Colonic mucosa (tissue), 4 donors: ENCODE measurements at regions of chr19 and their contacts with region 1.

Region 1: GRCh38 chr19:34364830-34365462 is at the start of gene GPI:
- DNase-seq: peak; percentile 76
- H3K4me3 ChIP-seq: peak within 1 kb of the TSS; percentile 100
- H3K27ac ChIP-seq: peak within 1 kb of the TSS; percentile 77
- H3K4me1 ChIP-seq: peaks cover 13% of the 10 kb centered on the region
- H3K27me3 ChIP-seq: no peaks in the 10 kb centered on the region
- CTCF ChIP-seq: no peak
- total RNA-seq, gene GPI: 470 to 592 TPM

Region 2: GRCh38 chr19:34430738-34431625 is 66.0 kb after region 1 on chr19:
- intact Hi-C with region 1: loop called (anchors 10 kb)
- DNase-seq: no peak
- H3K4me3 ChIP-seq: no peak overlapping the region
- H3K27ac ChIP-seq: no peak overlapping the region
- H3K4me1 ChIP-seq: peaks cover 8% of the 10 kb centered on the region
- H3K27me3 ChIP-seq: no peaks in the 10 kb centered on the region
- CTCF ChIP-seq: peak; percentile 45